ENCODE measurements at regions of chr2 and their contacts with region 1.

Region 1: GRCh38 chr2:45729753-45730512 is 78.5 kb downstream of the PRKCE start:
- DNase-seq: peak; percentile 85
- H3K4me3 ChIP-seq: peak overlapping the region; percentile 27
- H3K27ac ChIP-seq: peak overlapping the region; percentile 92
- H3K4me1 ChIP-seq: peaks cover 68% of the 10 kb centered on the region
- CTCF ChIP-seq: peak; percentile 73

Region 2: GRCh38 chr2:45458909-45459563 is 270.9 kb before region 1 on chr2:
- CTCF ChIA-PET with region 1: no interaction called
- POLR2A ChIA-PET with region 1: no interaction called
- intact Hi-C with region 1: loop called (anchors 10 kb)
- DNase-seq: peak; percentile 36
- H3K4me3 ChIP-seq: peak overlapping the region; percentile 44
- H3K27ac ChIP-seq: peak overlapping the region; percentile 99
- H3K4me1 ChIP-seq: peaks cover 85% of the 10 kb centered on the region
- CTCF ChIP-seq: no peak

Region 3: GRCh38 chr2:45691171-45691999 is 38.5 kb before region 1 on chr2:
- CTCF ChIA-PET with region 1: interaction called, 5 read pairs
- POLR2A ChIA-PET with region 1: interaction called, 3 read pairs
- intact Hi-C with region 1: loop called (anchors 2 kb)
- DNase-seq: peak; percentile 38
- H3K4me3 ChIP-seq: no peak overlapping the region
- H3K27ac ChIP-seq: no peak overlapping the region
- H3K4me1 ChIP-seq: peaks cover 26% of the 10 kb centered on the region
- CTCF ChIP-seq: no peak

Region 4: DNA sequence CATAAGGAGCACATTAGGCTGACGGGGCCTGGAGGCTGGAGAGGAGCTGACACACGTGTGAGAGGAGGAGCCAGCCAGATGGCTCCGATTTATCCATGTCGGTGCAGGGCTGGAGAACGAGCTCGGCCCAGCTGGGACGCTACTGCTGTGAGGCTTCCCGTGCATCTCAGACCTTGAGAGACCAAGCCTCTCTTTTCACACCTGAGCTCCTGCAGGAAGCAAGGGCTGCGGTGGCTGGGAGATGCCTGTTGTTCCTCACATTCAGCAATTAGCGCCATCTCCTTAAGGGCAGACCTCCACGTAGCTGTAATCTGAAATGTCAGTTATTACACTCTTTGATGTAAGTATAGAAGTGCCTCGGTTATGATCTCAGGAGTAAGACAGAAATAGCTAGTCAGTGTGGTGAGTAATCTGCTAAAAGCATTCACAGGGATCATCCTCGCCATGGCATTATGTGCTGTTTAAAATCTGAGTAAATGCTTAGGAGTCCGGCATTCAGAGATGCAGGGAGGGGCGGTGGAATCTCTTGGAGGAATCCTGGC is 29.4 kb after region 1 on chr2:
- CTCF ChIA-PET with region 1: no interaction called
- POLR2A ChIA-PET with region 1: no interaction called
- intact Hi-C with region 1: no loop called
- DNase-seq: no peak
- H3K4me3 ChIP-seq: no peak overlapping the region
- H3K27ac ChIP-seq: no peak overlapping the region
- H3K4me1 ChIP-seq: no peaks in the 10 kb centered on the region
- CTCF ChIP-seq: no peak

Region 5: DNA sequence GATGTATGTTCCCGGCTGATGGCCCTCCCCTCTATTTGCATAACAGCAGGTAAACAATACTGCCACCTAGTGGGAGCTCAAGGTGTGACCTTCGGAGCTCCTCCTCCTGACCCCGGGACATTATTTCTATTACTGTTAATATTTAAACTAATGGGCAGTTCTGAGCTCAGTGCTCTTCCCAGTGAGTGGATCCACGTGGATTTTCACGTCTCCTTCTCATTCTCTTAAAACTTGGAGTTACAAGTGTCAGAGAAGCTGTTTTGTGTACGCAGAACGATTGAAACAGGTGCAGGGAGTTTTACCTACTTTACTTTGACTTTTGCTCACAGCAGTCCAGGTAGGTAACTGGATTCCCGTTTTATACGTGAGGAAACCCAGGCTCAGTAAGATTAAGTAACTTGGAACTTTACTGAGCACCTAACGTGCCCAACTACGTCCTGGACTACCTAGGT is 48.8 kb after region 1 on chr2:
- CTCF ChIA-PET with region 1: no interaction called
- POLR2A ChIA-PET with region 1: interaction called, 4 read pairs
- intact Hi-C with region 1: loop called (anchors 2 kb)
- DNase-seq: peak; percentile 82
- H3K4me3 ChIP-seq: no peak overlapping the region
- H3K27ac ChIP-seq: no peak overlapping the region
- H3K4me1 ChIP-seq: peaks cover 18% of the 10 kb centered on the region
- CTCF ChIP-seq: peak; percentile 93

Region 6: GRCh38 chr2:45935791-45936622 is 206.1 kb after region 1 on chr2:
- CTCF ChIA-PET with region 1: no interaction called
- POLR2A ChIA-PET with region 1: no interaction called
- intact Hi-C with region 1: loop called (anchors 5 kb)
- DNase-seq: peak; percentile 68
- H3K4me3 ChIP-seq: no peak overlapping the region
- H3K27ac ChIP-seq: no peak overlapping the region
- H3K4me1 ChIP-seq: peaks cover 5% of the 10 kb centered on the region
- CTCF ChIP-seq: peak; percentile 78

Measured in OCI-LY7 (cell line).